ENCODE measurements at regions of chr4 and their contacts with region 1.

Region 1: DNA sequence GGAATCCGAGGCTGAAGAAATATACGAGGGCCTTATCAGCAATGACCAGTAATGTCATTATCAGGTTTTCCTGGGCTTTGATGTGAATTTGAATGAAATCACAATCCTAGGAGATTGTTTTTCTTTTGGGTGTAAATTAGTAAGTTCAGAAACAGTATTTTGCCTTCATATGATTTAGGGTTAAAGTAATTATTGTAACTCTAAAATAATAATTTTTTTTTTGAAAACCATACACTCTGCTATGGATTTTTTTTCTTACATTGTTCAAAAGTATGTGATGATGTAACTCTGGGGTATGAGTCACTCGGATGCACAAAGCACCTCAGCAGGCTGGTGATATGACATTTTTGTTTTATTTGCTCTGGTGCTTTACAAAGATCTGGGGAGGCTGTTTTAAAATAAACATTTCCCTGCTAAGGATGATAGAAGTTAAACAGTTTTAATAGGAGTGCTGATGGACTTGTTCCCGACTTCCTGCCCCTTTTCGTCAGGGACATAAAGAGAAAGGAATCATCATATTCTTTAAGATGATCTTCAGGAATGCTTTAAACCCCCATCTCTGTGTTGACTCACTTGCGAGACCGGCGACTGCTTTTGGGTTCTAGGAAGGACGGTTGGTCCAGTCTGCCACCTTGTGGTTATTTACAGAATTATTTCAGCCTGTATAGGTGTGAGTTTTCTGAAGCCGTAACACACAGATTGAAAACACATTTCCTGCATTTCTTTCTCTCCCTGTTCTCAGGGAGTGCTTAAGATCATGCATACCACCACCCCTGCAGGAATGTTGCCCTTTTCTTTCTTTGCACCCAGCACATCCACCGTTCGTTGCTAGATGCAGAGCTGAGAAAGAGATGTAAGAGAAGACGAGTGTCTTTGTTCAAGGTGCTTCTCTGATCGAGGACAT is 72.5 kb downstream of the RAPGEF2 start:
- DNase-seq: peak; percentile 49 to 88 (median 63)
- ATAC-seq: peak; percentile 93
- H3K4me3 ChIP-seq: no peak overlapping the region
- H3K27ac ChIP-seq: no peak overlapping the region; the same call in 2 of the 3 replicates
- H3K4me1 ChIP-seq: peaks cover 3 to 23% of the 10 kb centered on the region in 2 experiments; a peak in 3 of 5 replicates
- H3K27me3 ChIP-seq: no peaks in the 10 kb centered on the region
- CTCF ChIP-seq: peak; percentile 78 to 86 (median 80)
- EP300 ChIP-seq: peak; percentile 24
- POLR2A ChIP-seq: no peak
- RAD21 ChIP-seq: peak; percentile 87 to 88

Region 2: GRCh38 chr4:158578476-158578875 is 596.9 kb before region 1 on chr4:
- CTCF ChIA-PET with region 1: no interaction called
- POLR2A ChIA-PET with region 1: no interaction called
- in situ Hi-C with region 1: no loop called
- intact Hi-C with region 1: no loop called
- DNase-seq: peak in 3 of 4 experiments; percentile 12 to 35 (median 27)
- ATAC-seq: peak; percentile 95
- H3K4me3 ChIP-seq: no peak overlapping the region
- H3K27ac ChIP-seq: no peak overlapping the region
- H3K4me1 ChIP-seq: no peaks in the 10 kb centered on the region
- H3K27me3 ChIP-seq: no peaks in the 10 kb centered on the region; a peak in 1 of 5 replicates
- CTCF ChIP-seq: peak; percentile 34 to 63 (median 38); a peak in 3 of 6 replicates
- EP300 ChIP-seq: no peak
- POLR2A ChIP-seq: no peak
- RAD21 ChIP-seq: peak; percentile 54 to 63

Region 3: DNA sequence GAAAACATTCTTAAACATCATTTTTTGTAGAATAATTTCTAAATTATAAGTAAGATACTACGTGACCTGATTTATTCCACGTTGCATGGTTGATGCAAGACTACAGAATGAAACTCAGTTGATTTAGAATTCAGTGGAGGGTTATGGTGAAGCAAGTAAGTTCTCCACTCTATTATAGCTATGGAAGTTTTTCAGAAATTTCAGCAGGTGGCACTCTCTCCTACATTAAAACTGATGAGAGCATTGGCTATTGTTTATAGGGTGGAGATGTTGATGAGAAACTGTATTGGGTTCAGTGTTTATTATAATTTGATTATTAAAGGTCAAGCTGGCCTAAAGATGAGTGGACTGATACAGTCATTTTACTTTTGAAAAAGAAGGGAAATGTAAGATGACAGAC is 318.5 kb before region 1 on chr4:
- CTCF ChIA-PET with region 1: interaction called, 19 read pairs
- POLR2A ChIA-PET with region 1: no interaction called
- in situ Hi-C with region 1: no loop called
- intact Hi-C with region 1: loop called (anchors 1 kb)
- DNase-seq: peak in 2 of 4 experiments; percentile 28 to 32
- ATAC-seq: peak; percentile 96
- H3K4me3 ChIP-seq: no peak overlapping the region
- H3K27ac ChIP-seq: no peak overlapping the region
- H3K4me1 ChIP-seq: no peaks in the 10 kb centered on the region
- H3K27me3 ChIP-seq: no peaks in the 10 kb centered on the region
- CTCF ChIP-seq: peak; percentile 55 to 80 (median 61); a peak in 5 of 6 replicates
- EP300 ChIP-seq: no peak
- POLR2A ChIP-seq: no peak
- RAD21 ChIP-seq: peak; percentile 90 to 92

Region 4: GRCh38 chr4:159006202-159006601 is 169.1 kb before region 1 on chr4:
- CTCF ChIA-PET with region 1: no interaction called
- POLR2A ChIA-PET with region 1: no interaction called
- in situ Hi-C with region 1: no loop called
- intact Hi-C with region 1: no loop called
- DNase-seq: no peak
- ATAC-seq: no peak
- H3K4me3 ChIP-seq: no peak overlapping the region
- H3K27ac ChIP-seq: no peak overlapping the region
- H3K4me1 ChIP-seq: peaks cover 6 to 37% of the 10 kb centered on the region in 2 experiments; a peak in 4 of 5 replicates
- H3K27me3 ChIP-seq: no peaks in the 10 kb centered on the region
- CTCF ChIP-seq: no peak
- EP300 ChIP-seq: no peak
- POLR2A ChIP-seq: no peak
- RAD21 ChIP-seq: no peak

Region 5: GRCh38 chr4:159016593-159017024 is 158.7 kb before region 1 on chr4:
- CTCF ChIA-PET with region 1: no interaction called
- POLR2A ChIA-PET with region 1: no interaction called
- in situ Hi-C with region 1: no loop called
- intact Hi-C with region 1: loop called (anchors 1 kb)
- DNase-seq: peak; percentile 46 to 70 (median 58)
- ATAC-seq: peak; percentile 86
- H3K4me3 ChIP-seq: no peak overlapping the region
- H3K27ac ChIP-seq: no peak overlapping the region
- H3K4me1 ChIP-seq: peaks cover 3 to 13% of the 10 kb centered on the region in 2 experiments; a peak in 3 of 5 replicates
- H3K27me3 ChIP-seq: no peaks in the 10 kb centered on the region
- CTCF ChIP-seq: peak; percentile 52 to 63 (median 59)
- EP300 ChIP-seq: no peak
- POLR2A ChIP-seq: no peak
- RAD21 ChIP-seq: peak; percentile 30 to 69; a peak in 3 of 4 replicates

Region 6: GRCh38 chr4:159038536-159038935 is 136.8 kb before region 1 on chr4:
- CTCF ChIA-PET with region 1: no interaction called
- POLR2A ChIA-PET with region 1: no interaction called
- in situ Hi-C with region 1: no loop called
- intact Hi-C with region 1: no loop called
- DNase-seq: no peak
- ATAC-seq: no peak
- H3K4me3 ChIP-seq: no peak overlapping the region
- H3K27ac ChIP-seq: no peak overlapping the region
- H3K4me1 ChIP-seq: peaks cover 9 to 19% of the 10 kb centered on the region in 2 experiments; a peak in 4 of 5 replicates
- H3K27me3 ChIP-seq: no peaks in the 10 kb centered on the region
- CTCF ChIP-seq: no peak
- EP300 ChIP-seq: no peak
- POLR2A ChIP-seq: no peak
- RAD21 ChIP-seq: no peak

Region 7: GRCh38 chr4:159077702-159078495 is 97.4 kb before region 1 on chr4:
- CTCF ChIA-PET with region 1: no interaction called
- POLR2A ChIA-PET with region 1: no interaction called
- in situ Hi-C with region 1: no loop called
- intact Hi-C with region 1: no loop called
- DNase-seq: no peak
- ATAC-seq: no peak
- H3K4me3 ChIP-seq: no peak overlapping the region
- H3K27ac ChIP-seq: no peak overlapping the region
- H3K4me1 ChIP-seq: no peaks in the 10 kb centered on the region; a peak in 2 of 5 replicates
- H3K27me3 ChIP-seq: no peaks in the 10 kb centered on the region
- CTCF ChIP-seq: no peak
- EP300 ChIP-seq: no peak
- POLR2A ChIP-seq: no peak
- RAD21 ChIP-seq: no peak

Region 8: DNA sequence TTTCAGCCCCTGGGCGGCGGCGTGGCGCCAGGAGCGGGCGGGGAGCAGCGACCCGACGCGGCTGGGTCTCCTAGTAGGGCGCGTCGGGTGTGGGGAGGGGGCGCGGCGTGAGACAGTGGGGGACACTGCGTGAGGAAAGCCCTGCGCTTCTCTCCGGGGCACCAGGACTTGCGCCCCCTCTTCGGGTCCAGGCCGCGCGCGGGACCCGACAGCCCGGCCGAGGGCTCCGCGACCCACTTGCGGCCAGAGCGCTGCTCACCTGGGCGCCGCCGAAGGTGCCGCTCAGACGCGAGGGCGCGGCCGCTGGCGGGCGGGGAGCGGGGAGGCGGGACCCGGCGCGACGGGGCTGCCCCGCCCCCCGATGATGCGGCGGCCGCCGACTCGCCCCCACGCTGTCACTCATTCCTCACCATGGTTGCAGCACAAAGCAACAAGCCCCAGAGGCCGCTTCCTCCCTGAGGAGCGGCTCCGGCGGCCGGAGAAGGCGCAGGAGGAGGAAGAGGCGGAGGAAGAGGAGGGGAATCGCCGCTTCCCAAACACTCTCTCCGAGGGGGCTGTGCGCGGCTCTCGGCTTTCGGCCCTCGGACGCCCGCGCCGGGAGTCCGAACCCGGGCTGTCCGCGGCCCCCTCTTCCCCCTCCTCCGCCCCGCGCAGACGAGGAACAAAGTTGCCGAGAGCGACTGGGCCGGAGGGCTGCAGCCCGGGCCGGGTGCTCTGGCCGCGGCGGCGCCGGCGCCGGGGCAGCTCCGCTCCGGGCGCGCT is 72.5 kb before region 1 on chr4 and contains the start of gene RAPGEF2:
- CTCF ChIA-PET with region 1: interaction called, 3 read pairs
- POLR2A ChIA-PET with region 1: interaction called, 3 read pairs
- in situ Hi-C with region 1: no loop called
- intact Hi-C with region 1: loop called (anchors 1 kb)
- DNase-seq: peak; percentile 94 to 96 (median 94)
- ATAC-seq: peak; percentile 79
- H3K4me3 ChIP-seq: peak within 1 kb of the TSS; percentile 93
- H3K27ac ChIP-seq: peak within 1 kb of the TSS; percentile 83
- H3K4me1 ChIP-seq: peaks cover 13 to 31% of the 10 kb centered on the region in 2 experiments
- H3K27me3 ChIP-seq: no peaks in the 10 kb centered on the region
- CTCF ChIP-seq: 0 out of 6 replicates have a peak, but pooled peaks of 1 of the 3 experiments have one; percentile 5
- EP300 ChIP-seq: no peak
- POLR2A ChIP-seq: peak; percentile 76
- RAD21 ChIP-seq: no peak
- polyA plus RNA-seq, gene RAPGEF2: 3.1 to 3.4 TPM